Activated CD8-positive, alpha-beta T cell treated with anti-CD3 and anti-CD28 coated beads for 36 hours (primary cell): ENCODE measurements at regions of chr1 and their contacts with region 1.

Region 1: GRCh38 chr1:64923294-64923721 is 43.0 kb downstream of the JAK1 start:
- DNase-seq: peak; percentile 69
- ATAC-seq: peak; percentile 58
- H3K4me3 Mint-ChIP-seq: peak overlapping the region; percentile 5
- H3K27ac Mint-ChIP-seq: peak overlapping the region; percentile 85
- H3K4me1 Mint-ChIP-seq: peaks cover 93% of the 10 kb centered on the region
- H3K27me3 Mint-ChIP-seq: no peaks in the 10 kb centered on the region
- CTCF ChIP-seq: no peak

Region 2: DNA sequence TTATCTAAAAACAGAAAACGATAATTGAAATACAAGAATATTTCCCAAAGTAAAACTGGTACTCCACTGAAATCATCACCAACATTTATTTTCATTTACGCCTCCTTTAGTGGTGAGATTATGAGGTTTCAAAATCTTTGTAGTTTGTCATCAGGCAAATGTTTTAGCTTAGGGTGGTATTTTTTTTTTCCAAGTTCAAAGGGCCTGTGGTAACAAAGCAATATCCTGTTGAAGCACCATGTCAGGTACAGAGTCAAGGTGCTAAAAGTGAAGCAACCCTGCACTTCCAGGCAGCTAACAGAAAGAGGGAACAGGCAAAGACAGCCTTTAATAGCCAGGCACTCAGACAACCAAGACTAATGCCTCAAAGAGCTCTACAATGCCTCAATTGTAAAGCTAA is 46.2 kb before region 1 on chr1:
- CTCF ChIA-PET with region 1: no interaction called
- POLR2A ChIA-PET with region 1: interaction called, 7 read pairs
- intact Hi-C with region 1: loop called (anchors 1 kb)
- DNase-seq: peak; percentile 34
- ATAC-seq: peak; percentile 84
- H3K4me3 Mint-ChIP-seq: no peak overlapping the region
- H3K27ac Mint-ChIP-seq: peak overlapping the region; percentile 22
- H3K4me1 Mint-ChIP-seq: peaks cover 51% of the 10 kb centered on the region
- H3K27me3 Mint-ChIP-seq: no peaks in the 10 kb centered on the region
- CTCF ChIP-seq: no peak

Region 3: DNA sequence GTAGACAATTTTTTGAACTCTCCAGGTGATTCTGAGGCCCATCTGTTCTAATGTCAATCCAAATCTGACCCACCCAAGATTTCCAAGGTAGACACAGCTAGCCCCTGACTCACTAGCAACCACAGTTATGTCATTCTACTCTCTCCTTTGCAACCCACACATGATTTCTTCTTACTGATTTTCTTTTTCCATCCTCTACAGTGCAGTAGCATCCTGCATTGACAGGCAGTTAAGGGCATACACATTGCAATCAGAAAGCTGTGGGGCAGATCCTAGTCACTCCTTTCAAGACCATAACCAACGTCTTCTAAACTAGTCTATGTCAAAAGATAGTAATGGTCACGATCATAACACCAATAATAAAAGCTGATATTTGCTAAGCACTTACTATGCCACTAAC is 11.1 kb before region 1 on chr1:
- CTCF ChIA-PET with region 1: interaction called, 5 read pairs
- POLR2A ChIA-PET with region 1: interaction called, 20 read pairs
- intact Hi-C with region 1: no loop called
- DNase-seq: peak; percentile 31
- ATAC-seq: peak; percentile 93
- H3K4me3 Mint-ChIP-seq: no peak overlapping the region
- H3K27ac Mint-ChIP-seq: peak overlapping the region; percentile 81
- H3K4me1 Mint-ChIP-seq: peaks cover 82% of the 10 kb centered on the region
- H3K27me3 Mint-ChIP-seq: no peaks in the 10 kb centered on the region
- CTCF ChIP-seq: no peak

Region 4: DNA sequence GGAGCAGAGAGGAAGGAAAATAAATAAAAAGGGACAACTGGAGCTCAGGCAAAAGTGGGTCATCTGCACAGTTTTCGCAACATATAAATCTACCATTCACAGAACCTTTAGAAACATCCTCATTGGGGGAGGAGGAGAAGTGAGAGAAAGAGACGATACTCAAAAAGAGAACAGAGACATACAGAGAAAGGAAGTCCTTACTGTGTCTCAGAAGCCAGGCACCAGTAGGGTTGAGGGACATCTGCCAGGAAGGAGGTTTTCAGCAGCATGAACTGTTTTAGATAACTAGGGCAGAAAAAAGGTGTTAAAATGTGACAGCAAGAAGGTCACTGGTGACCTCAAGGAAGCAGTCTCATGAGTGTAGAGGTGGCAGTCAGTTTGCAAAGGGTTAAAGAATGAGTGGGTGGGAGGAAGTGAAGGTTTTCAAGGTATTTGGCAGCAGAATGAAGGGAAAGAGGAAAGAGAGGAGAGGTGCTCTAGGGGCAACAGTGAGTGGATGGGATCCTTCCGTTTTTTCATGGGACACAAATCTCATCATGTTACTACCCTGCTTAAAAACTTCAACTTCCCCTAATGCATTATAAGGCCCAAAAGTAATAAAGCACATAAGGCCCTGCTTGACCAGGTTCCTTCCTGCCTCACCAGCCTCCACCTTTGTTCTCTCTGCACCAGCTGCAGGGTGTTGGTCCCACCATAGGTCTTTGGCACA is 33.6 kb after region 1 on chr1:
- CTCF ChIA-PET with region 1: interaction called, 4 read pairs
- POLR2A ChIA-PET with region 1: interaction called, 14 read pairs
- intact Hi-C with region 1: loop called (anchors 2 kb)
- DNase-seq: peak; percentile 78
- ATAC-seq: peak; percentile 83
- H3K4me3 Mint-ChIP-seq: no peak overlapping the region
- H3K27ac Mint-ChIP-seq: no peak overlapping the region
- H3K4me1 Mint-ChIP-seq: peaks cover 59% of the 10 kb centered on the region
- H3K27me3 Mint-ChIP-seq: no peaks in the 10 kb centered on the region
- CTCF ChIP-seq: no peak

Region 5: DNA sequence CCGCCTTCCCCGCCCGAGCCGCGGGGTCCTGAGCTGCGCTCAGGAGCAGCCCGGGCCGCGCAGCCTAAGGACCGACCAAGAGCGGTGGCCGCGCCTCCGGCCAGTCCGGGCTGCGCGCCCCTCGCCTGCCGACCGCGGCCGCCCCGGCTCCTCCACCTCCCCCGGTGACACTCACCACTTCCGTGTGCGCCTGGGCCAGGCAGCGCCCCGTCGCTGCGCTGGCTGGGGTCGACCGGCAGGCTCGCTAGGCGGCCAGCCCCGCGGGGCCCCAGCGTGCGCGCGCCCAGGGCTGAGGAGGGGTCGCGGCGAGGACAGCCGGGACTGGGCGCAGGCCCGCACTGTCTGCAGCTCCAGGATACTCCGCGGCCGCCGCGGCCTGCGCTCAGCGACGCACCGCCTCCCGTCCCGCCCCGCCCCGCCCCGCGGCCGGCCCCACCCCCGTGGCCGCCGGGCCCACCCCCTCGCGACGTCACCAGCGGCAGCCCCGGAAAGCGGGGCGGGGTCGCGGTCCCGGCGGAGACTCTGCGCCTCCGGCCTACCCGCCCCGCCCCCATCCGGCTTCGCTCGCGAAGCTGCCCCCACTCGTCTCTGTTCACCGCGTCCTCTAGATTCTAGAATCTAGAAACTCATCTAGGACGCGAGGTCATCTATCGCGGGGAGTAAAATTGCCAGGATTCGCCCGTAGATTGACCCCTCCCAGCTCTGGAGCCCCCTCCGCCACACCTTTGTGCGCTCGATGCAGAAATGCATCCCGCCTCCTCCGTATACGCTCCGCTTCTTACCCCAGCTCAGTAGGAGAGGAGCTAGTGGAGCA is 43.1 kb after region 1 on chr1 and contains the start of gene JAK1:
- CTCF ChIA-PET with region 1: interaction called, 4 read pairs
- POLR2A ChIA-PET with region 1: interaction called, 14 read pairs
- intact Hi-C with region 1: no loop called
- DNase-seq: peak; percentile 88
- ATAC-seq: peak; percentile 84
- H3K4me3 Mint-ChIP-seq: peak within 1 kb of the TSS; percentile 86
- H3K27ac Mint-ChIP-seq: peak within 1 kb of the TSS; percentile 94
- H3K4me1 Mint-ChIP-seq: peaks cover 44% of the 10 kb centered on the region
- H3K27me3 Mint-ChIP-seq: no peaks in the 10 kb centered on the region
- CTCF ChIP-seq: no peak
- total RNA-seq, gene JAK1: 96.3 to 108 TPM